HCT116 (cell line): ENCODE measurements at regions of chr4 and their contacts with region 1.

Region 1: GRCh38 chr4:15479089-15479912 is 9.6 kb downstream of the CC2D2A start:
- DNase-seq: peak; percentile 82
- ATAC-seq: peak; percentile 87
- H3K4me3 ChIP-seq: peak overlapping the region; percentile 62 to 68
- H3K27ac ChIP-seq: peak overlapping the region; percentile 56
- H3K4me1 ChIP-seq: peaks cover 5 to 11% of the 10 kb centered on the region in 2 experiments
- H3K27me3 ChIP-seq: no peaks in the 10 kb centered on the region
- CTCF ChIP-seq: peak; percentile 64 to 79 (median 74)
- POLR2A ChIP-seq: peak; percentile 70
- RAD21 ChIP-seq: peak; percentile 92

Region 2: DNA sequence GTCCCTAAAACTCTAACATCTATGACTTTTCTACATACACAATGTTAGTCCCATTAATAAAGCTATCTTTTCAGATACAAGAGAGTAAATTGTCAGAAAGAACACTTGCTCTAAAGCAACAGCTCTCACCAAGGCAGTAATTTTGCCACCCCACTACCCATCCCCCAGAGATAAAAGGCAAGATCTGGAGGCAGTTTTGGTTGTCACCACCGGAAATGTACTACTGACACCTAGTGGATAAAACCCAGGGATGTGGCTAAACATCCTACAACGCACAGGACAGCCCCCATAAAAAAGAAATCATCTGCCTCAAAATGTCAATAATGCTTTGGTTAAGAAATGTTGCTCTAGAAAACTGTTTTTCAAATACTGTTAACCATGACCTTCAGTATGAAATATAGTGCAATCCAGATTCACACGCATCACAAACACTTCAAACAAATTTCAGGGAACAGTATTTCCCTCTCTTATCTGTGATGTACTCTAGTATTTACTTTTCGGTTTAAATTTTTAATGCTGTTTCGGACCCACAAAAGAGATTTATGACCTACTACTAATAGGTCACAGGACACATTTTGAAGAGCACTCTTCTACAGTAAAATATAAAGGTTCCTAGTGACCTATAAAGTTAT is 170.7 kb after region 1 on chr4:
- CTCF ChIA-PET with region 1: interaction called, 8 read pairs
- POLR2A ChIA-PET with region 1: no interaction called
- RAD21 ChIA-PET with region 1: no interaction called
- intact Hi-C with region 1: loop called (anchors 1 kb)
- DNase-seq: peak; percentile 45
- ATAC-seq: peak; percentile 66
- H3K4me3 ChIP-seq: no peak overlapping the region
- H3K27ac ChIP-seq: no peak overlapping the region
- H3K4me1 ChIP-seq: peaks cover 8 to 18% of the 10 kb centered on the region in 2 experiments
- H3K27me3 ChIP-seq: no peaks in the 10 kb centered on the region
- CTCF ChIP-seq: peak; percentile 63 to 89 (median 77); a peak in 5 of 6 replicates
- POLR2A ChIP-seq: no peak
- RAD21 ChIP-seq: peak; percentile 80